Adrenal gland (tissue), 19 donors: ENCODE measurements at regions of chr1 and their contacts with region 1.

Region 1: GRCh38 chr1:205335643-205336091 is 14.1 kb upstream of the NUAK2 start:
- DNase-seq: peak; percentile 86 to 92 (median 89)
- H3K4me3 ChIP-seq: no peak overlapping the region
- H3K27ac ChIP-seq: no peak overlapping the region
- H3K4me1 ChIP-seq: peaks cover under 1% of the 10 kb centered on the region in 2 donors
- H3K27me3 ChIP-seq: no peaks in the 10 kb centered on the region
- CTCF ChIP-seq: peak; percentile 84 to 99 (median 96)
- POLR2A ChIP-seq: no peak

Region 2: DNA sequence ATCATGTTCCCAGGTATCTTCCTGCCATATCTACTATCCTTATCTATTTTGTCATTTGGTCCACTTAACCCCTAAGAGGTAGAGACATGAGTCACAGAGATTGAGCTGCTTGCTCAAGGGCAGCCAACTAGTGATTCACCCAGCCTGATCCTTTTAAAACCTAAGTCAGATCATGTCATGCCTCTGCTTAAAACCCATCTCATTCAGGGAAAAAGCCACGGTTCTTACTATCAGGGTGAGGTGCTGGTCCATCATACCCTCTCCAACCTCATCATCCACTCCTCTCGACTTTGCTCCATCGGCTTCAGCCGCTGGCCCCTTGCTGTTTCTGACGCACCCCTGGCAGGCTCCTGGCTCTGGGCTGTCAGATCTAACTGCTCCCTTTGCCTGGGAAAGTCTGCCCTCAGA is 909.6 kb before region 1 on chr1:
- intact Hi-C with region 1: no loop called
- DNase-seq: peak; percentile 57 to 86 (median 80)
- H3K4me3 ChIP-seq: peak overlapping the region in 1 of 4 donors; percentile 4
- H3K27ac ChIP-seq: peak overlapping the region; percentile 47 to 81 (median 74)
- H3K4me1 ChIP-seq: peaks cover 12 to 24% of the 10 kb centered on the region in 2 donors
- H3K27me3 ChIP-seq: no peaks in the 10 kb centered on the region
- CTCF ChIP-seq: no peak
- POLR2A ChIP-seq: peak in 1 of 2 donors; percentile 36

Region 3: DNA sequence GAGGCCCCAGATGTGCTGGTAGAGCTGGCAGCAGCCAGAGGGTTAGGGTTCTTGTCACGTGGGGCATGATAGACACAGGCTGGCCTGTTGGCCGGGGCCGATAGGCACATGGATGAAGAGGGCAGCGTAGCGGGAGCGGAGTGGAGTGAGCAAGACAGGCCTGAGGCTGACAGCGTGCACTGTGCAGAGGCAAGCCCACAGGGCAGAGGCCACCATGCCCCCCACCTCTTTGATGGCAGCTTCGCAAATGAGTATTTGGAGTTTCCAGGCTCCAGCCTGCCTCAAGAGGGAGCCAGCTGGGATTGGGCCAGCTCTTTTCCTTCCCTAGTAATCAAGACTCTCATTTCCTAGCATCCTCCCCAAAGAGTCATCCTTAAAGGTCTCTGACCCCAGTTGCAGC is 64.4 kb before region 1 on chr1:
- intact Hi-C with region 1: no loop called
- DNase-seq: peak in 4 of 7 donors; percentile 33 to 82 (median 72)
- H3K4me3 ChIP-seq: no peak overlapping the region
- H3K27ac ChIP-seq: no peak overlapping the region
- H3K4me1 ChIP-seq: peaks cover 0 to 12% of the 10 kb centered on the region in 2 donors
- H3K27me3 ChIP-seq: no peaks in the 10 kb centered on the region
- CTCF ChIP-seq: no peak
- POLR2A ChIP-seq: no peak

Region 4: GRCh38 chr1:205480349-205480985 is 144.8 kb after region 1 on chr1:
- intact Hi-C with region 1: loop called (anchors 5 kb)
- DNase-seq: no peak
- H3K4me3 ChIP-seq: no peak overlapping the region
- H3K27ac ChIP-seq: no peak overlapping the region
- H3K4me1 ChIP-seq: no peaks in the 10 kb centered on the region
- H3K27me3 ChIP-seq: no peaks in the 10 kb centered on the region
- CTCF ChIP-seq: no peak
- POLR2A ChIP-seq: no peak

Region 5: DNA sequence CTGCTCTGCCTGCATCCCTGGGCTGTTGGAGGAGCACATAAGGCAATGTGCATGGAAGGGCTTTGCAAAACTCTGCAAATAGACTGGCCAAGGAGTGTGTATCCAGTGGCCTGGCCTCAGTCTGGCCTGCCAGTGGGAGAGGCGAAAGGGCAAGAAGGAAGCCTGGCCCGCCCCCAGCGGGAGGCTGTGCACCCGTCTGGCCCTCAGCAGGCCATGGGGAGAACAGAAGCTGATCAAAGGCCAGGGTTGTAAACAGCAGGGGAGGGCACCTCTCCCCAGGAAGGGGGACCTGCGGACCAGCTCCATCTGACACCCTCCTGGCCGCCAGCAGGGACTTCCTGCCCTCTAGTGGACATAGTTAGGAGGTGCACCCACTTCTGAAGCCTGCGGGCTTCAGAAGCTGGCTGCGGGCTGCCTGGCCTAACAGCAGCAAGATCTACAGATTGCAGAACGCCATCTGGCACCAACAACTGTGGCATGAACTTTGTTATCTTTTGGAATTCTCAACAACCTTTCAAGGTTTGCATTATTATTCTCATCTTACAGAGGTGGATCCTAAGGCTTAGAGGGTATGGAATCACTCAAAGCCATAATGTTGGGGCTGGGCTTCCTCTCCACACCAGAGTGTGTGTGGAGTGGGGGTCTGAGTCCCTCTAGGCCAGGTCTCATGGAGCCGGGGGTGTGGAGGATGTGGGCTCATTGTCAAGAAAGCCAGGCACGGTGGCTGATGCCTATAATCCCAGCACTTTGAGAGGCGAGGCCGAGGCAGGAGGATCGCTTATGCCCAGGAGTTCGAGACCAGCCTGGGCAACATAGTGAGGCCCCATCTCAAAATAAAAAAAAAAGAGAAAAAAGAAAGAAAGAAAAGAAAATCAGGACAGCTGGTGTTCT is 149.9 kb after region 1 on chr1:
- intact Hi-C with region 1: loop called (anchors 5 kb)
- DNase-seq: peak; percentile 64 to 87 (median 79)
- H3K4me3 ChIP-seq: no peak overlapping the region
- H3K27ac ChIP-seq: no peak overlapping the region
- H3K4me1 ChIP-seq: no peaks in the 10 kb centered on the region
- H3K27me3 ChIP-seq: no peaks in the 10 kb centered on the region
- CTCF ChIP-seq: peak; percentile 89 to 98 (median 94)
- POLR2A ChIP-seq: no peak

Region 6: GRCh38 chr1:205528887-205529825 is 193.5 kb after region 1 on chr1:
- intact Hi-C with region 1: loop called (anchors 5 to 10 kb)
- DNase-seq: peak; percentile 57 to 86 (median 81)
- H3K4me3 ChIP-seq: peak overlapping the region in 1 of 4 donors; percentile 29
- H3K27ac ChIP-seq: no peak overlapping the region
- H3K4me1 ChIP-seq: no peaks in the 10 kb centered on the region
- H3K27me3 ChIP-seq: no peaks in the 10 kb centered on the region
- CTCF ChIP-seq: peak; percentile 73 to 97 (median 86)
- POLR2A ChIP-seq: no peak